Activated CD4-positive, alpha-beta memory T cell treated with anti-CD3 and anti-CD28 coated beads for 36 hours (primary cell): ENCODE measurements at regions of chr2 and their contacts with region 1.

Region 1: DNA sequence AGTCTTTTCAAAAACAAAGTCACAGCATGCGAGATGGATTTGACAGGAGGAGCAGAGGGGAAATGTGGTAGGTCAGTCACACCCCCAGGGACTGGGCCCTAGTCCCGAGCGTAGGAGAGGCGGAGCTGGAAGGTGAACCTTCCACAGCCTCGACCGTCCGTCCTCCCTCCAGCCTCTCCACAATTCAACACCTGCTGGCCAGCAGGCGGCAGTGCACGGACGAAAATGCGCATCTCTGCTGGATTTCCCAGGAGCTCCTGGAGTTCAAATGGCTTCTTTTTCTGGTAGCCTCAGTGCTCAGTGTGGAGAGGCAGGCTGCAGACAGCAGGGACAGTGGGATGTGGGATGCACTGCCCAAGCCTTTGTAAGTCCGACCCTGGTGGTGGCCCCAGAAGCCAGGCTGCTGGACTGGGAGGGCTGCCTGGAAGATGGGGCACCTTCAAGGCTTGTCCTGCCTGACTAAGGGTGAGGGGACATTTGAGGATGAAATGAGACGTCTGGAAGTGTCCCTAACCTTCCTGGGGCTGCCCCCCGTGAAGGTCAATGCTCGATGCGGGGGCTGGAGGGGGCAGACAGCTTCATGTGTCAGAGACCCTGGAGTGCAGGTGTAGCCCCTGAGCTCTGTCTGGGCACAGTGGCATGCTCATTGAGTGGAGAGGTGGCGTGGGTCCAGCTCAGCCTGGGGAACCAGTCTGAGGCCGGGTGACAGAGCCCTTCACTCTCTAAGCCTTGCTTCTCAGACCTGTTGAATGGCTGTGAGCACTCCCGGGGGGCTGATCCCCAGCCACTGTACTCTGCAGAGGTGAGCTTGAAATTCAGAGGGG is 189.5 kb downstream of the TFCP2L1 start:
- DNase-seq: peak; percentile 47
- H3K4me3 Mint-ChIP-seq: no peak overlapping the region
- H3K27ac Mint-ChIP-seq: no peak overlapping the region
- H3K4me1 Mint-ChIP-seq: no peaks in the 10 kb centered on the region
- H3K27me3 Mint-ChIP-seq: peaks cover 5% of the 10 kb centered on the region

Region 2: GRCh38 chr2:120914839-120915521 is 180.5 kb before region 1 on chr2:
- CTCF ChIA-PET with region 1: no interaction called
- POLR2A ChIA-PET with region 1: no interaction called
- intact Hi-C with region 1: no loop called
- DNase-seq: no peak
- H3K4me3 Mint-ChIP-seq: no peak overlapping the region
- H3K27ac Mint-ChIP-seq: no peak overlapping the region
- H3K4me1 Mint-ChIP-seq: no peaks in the 10 kb centered on the region
- H3K27me3 Mint-ChIP-seq: no peaks in the 10 kb centered on the region

Region 3: GRCh38 chr2:121076885-121077549 is 18.5 kb before region 1 on chr2:
- CTCF ChIA-PET with region 1: interaction called, 16 read pairs
- POLR2A ChIA-PET with region 1: no interaction called
- intact Hi-C with region 1: no loop called
- DNase-seq: peak; percentile 80
- H3K4me3 Mint-ChIP-seq: no peak overlapping the region
- H3K27ac Mint-ChIP-seq: no peak overlapping the region
- H3K4me1 Mint-ChIP-seq: peaks cover 2% of the 10 kb centered on the region
- H3K27me3 Mint-ChIP-seq: peaks cover 16% of the 10 kb centered on the region

Region 4: DNA sequence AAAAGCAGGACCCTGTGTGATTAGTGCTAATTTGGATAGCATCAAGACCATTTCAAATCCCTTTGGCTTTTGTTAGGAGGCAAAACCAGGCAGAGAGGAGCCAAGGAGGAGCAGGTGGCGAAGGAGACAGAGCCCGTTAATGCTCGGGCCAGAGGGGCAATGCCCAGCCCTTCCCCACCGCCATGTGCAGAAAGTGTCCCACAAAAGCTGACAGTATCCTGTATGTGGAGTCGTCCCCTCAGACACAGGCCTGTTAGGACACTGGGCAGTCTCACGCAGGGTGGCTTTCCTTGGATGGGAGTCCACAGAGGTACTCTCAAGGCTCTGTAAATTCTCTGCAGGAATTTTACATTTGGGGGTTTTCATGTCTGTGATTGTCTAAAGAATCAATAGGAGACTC is 234.3 kb after region 1 on chr2:
- CTCF ChIA-PET with region 1: interaction called, 4 read pairs
- POLR2A ChIA-PET with region 1: no interaction called
- intact Hi-C with region 1: loop called (anchors 10 kb)
- DNase-seq: no peak
- H3K4me3 Mint-ChIP-seq: no peak overlapping the region
- H3K27ac Mint-ChIP-seq: no peak overlapping the region
- H3K4me1 Mint-ChIP-seq: peaks cover 3% of the 10 kb centered on the region
- H3K27me3 Mint-ChIP-seq: peaks cover 3% of the 10 kb centered on the region